Naive thymus-derived CD4-positive, alpha-beta T cell (primary cell): ENCODE measurements at regions of chr3 and their contacts with region 1.

Region 1: GRCh38 chr3:40452876-40453730 is 4.0 kb upstream of the RPL14 start:
- DNase-seq: peak; percentile 81 to 97 (median 93)
- ATAC-seq: peak; percentile 95
- H3K4me3 ChIP-seq: peak overlapping the region; percentile 79
- H3K4me3 Mint-ChIP-seq: peak overlapping the region; percentile 88 to 99 (median 94)
- H3K27ac ChIP-seq: peak overlapping the region; percentile 94
- H3K27ac Mint-ChIP-seq: peak overlapping the region; percentile 96 to 100 (median 98)
- H3K4me1 ChIP-seq: peaks cover 13 to 18% of the 10 kb centered on the region in 2 donors
- H3K4me1 Mint-ChIP-seq: peaks cover 13 to 53% (median 39%) of the 10 kb centered on the region in 7 donors
- H3K27me3 ChIP-seq: no peaks in the 10 kb centered on the region
- H3K27me3 Mint-ChIP-seq: no peaks in the 10 kb centered on the region

Region 2: DNA sequence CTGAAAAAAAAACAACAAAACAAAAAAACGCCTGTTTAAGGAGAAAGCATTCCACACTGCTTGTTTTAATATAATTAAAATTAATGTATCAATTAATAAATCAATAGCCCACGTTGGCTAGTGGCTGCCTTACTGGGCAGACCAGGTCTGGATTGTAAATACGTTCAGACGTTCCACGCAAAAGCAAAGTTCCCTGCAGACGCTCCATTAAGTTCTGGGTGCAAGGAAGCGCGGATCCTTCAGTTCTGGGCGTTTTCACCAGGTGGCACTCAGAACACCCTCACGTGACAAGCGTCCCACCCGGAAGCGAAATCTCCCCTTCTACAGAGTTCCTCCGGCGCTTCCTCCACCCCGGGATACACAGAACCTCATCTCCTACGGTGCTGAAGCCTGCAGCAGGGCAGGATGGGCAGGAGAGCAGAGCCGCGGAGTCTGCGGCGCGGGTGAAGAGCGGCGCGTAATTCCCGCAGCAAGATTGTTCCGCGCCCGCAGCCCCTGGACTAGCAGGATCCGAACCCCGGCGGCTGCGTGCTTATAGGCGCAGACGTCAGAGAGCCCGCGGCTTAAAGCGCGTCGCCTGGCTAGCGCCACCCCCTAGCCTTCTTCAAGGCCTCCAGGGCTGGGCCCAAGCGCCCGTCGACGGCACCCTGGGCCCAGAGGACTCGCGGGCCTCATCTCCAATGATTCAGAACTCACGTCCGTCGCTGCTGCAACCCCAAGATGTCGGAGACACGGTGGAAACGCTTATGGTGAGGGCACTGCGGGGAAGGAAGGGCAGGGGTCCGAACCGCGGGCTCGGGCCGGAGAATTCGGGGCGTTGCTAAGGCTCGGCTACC is 1069.8 kb before region 1 on chr3 and contains the start of gene SLC25A38:
- CTCF ChIA-PET with region 1: no interaction called
- POLR2A ChIA-PET with region 1: no interaction called
- intact Hi-C with region 1: loop called in 1 of 2 experiments (anchors 1 kb)
- DNase-seq: peak; percentile 60 to 86 (median 84)
- ATAC-seq: peak; percentile 86
- H3K4me3 ChIP-seq: peak within 1 kb of the TSS; percentile 88
- H3K4me3 Mint-ChIP-seq: peak within 1 kb of the TSS; percentile 91 to 99 (median 97)
- H3K27ac ChIP-seq: peak within 1 kb of the TSS; percentile 96
- H3K27ac Mint-ChIP-seq: peak within 1 kb of the TSS; percentile 95 to 100 (median 99)
- H3K4me1 ChIP-seq: peaks cover 26 to 39% of the 10 kb centered on the region in 2 donors
- H3K4me1 Mint-ChIP-seq: peaks cover 36 to 59% (median 49%) of the 10 kb centered on the region in 7 donors
- H3K27me3 ChIP-seq: no peaks in the 10 kb centered on the region
- H3K27me3 Mint-ChIP-seq: no peaks in the 10 kb centered on the region
- total RNA-seq, gene SLC25A38: 30.3 to 50.2 (median 46.8) TPM

Region 3: DNA sequence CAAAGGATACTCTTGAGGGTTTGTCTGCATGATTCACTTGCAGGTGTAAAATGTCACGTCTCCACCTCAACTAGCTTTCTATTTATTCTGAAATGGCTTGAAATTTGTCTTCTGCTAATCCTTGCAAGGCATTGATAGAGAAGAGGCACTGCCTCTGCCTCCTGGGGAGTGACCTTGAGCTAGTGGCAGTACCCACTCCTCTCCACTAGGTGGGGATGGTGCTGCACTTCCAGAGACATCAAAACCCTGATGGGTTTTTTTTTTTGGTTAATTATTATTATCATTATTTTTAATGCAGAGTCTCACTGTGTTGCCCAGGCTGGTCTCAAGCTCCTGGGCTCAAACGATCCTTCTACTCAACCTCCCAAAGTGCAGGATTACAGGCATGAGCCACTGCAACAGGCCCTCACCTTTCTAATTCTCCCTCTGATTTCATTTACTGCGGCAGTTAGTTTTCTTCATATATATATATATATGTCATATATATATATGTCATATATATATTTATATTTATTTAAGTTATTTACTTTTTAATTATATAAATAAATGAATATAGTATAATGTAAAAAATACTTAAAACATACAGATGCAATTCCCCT is 261.2 kb before region 1 on chr3:
- CTCF ChIA-PET with region 1: no interaction called
- POLR2A ChIA-PET with region 1: no interaction called
- intact Hi-C with region 1: loop called in 1 of 2 experiments (anchors 5 kb)
- DNase-seq: peak; percentile 7 to 55 (median 38)
- ATAC-seq: peak; percentile 85
- H3K4me3 ChIP-seq: no peak overlapping the region
- H3K4me3 Mint-ChIP-seq: no peak overlapping the region
- H3K27ac ChIP-seq: no peak overlapping the region
- H3K27ac Mint-ChIP-seq: no peak overlapping the region
- H3K4me1 ChIP-seq: no peaks in the 10 kb centered on the region
- H3K4me1 Mint-ChIP-seq: no peaks in the 10 kb centered on the region
- H3K27me3 ChIP-seq: no peaks in the 10 kb centered on the region
- H3K27me3 Mint-ChIP-seq: no peaks in the 10 kb centered on the region

Region 4: GRCh38 chr3:40464339-40465110 is 11.4 kb after region 1 on chr3:
- CTCF ChIA-PET with region 1: no interaction called
- POLR2A ChIA-PET with region 1: interaction called, 12 read pairs
- intact Hi-C with region 1: no loop called
- DNase-seq: peak in 7 of 9 donors; percentile 46 to 72 (median 65)
- ATAC-seq: peak; percentile 93
- H3K4me3 ChIP-seq: no peak overlapping the region
- H3K4me3 Mint-ChIP-seq: peak overlapping the region; percentile 6 to 67 (median 42)
- H3K27ac ChIP-seq: peak overlapping the region; percentile 43
- H3K27ac Mint-ChIP-seq: peak overlapping the region; percentile 35 to 90 (median 80)
- H3K4me1 ChIP-seq: peaks cover 13 to 20% of the 10 kb centered on the region in 2 donors
- H3K4me1 Mint-ChIP-seq: peaks cover 13 to 42% (median 34%) of the 10 kb centered on the region in 7 donors
- H3K27me3 ChIP-seq: no peaks in the 10 kb centered on the region
- H3K27me3 Mint-ChIP-seq: no peaks in the 10 kb centered on the region

Region 5: DNA sequence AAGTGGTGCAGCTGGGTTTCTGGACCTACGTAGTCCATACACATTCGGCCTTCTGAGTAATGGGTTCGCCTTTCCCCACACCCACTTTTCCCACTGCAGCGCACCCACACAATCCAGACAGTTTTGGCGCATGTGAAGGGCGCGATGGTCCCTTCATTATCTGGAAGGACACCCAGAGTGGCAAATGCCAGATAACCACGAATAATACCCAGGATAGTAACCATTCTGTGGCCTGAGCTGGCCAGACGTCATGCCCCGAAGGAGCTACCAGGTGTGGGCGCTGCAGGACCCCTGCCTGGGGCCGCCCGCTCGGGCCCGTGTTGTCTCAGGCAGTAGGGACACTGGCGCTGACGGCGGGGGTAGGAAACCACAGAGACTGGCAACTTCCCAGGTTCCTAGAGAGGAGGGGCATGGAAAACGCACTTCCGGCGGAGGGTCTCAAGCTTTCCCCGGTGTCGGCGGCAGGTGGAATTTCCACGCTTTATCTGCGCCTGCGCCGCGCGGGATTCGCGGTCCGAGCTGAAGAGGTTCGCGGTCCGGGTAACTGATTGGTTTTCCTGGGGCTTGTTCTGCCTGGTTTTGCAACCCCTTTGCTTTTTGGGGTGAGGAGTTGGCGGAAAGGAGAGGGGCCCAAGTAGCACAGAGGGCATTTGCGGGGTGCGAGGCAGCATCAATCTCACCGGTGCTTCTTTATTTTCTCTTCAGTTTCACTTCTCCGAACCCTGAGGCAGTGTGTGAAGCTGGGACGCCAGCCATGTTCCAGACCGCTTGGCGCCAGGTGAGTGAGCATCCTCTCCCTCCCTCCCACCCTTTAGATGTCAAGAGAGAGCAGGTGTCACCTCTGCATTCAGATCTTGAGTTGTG is 52.7 kb after region 1 on chr3 and contains the start of gene ZNF620:
- CTCF ChIA-PET with region 1: interaction called, 3 read pairs
- POLR2A ChIA-PET with region 1: interaction called, 11 read pairs
- intact Hi-C with region 1: loop called (anchors 1 kb)
- DNase-seq: peak; percentile 11 to 57 (median 29)
- ATAC-seq: peak; percentile 82
- H3K4me3 ChIP-seq: peak within 1 kb of the TSS; percentile 88
- H3K4me3 Mint-ChIP-seq: peak within 1 kb of the TSS; percentile 86 to 98 (median 97)
- H3K27ac ChIP-seq: peak within 1 kb of the TSS; percentile 61
- H3K27ac Mint-ChIP-seq: peak within 1 kb of the TSS; percentile 67 to 94 (median 86)
- H3K4me1 ChIP-seq: peaks cover 5% of the 10 kb centered on the region in 2 donors
- H3K4me1 Mint-ChIP-seq: peaks cover 6 to 27% (median 9%) of the 10 kb centered on the region in 7 donors
- H3K27me3 ChIP-seq: no peaks in the 10 kb centered on the region
- H3K27me3 Mint-ChIP-seq: peaks cover 0 to 12% (median 0%) of the 10 kb centered on the region in 5 donors
- total RNA-seq, gene ZNF620: 1.3 to 6.4 (median 3.3) TPM

Region 6: GRCh38 chr3:41117398-41117870 is 664.3 kb after region 1 on chr3:
- CTCF ChIA-PET with region 1: no interaction called
- POLR2A ChIA-PET with region 1: no interaction called
- intact Hi-C with region 1: loop called in 1 of 2 experiments (anchors 1 kb)
- DNase-seq: peak; percentile 67 to 93 (median 90)
- ATAC-seq: peak; percentile 92
- H3K4me3 ChIP-seq: peak overlapping the region; percentile 25
- H3K4me3 Mint-ChIP-seq: peak overlapping the region; percentile 43 to 90 (median 78)
- H3K27ac ChIP-seq: peak overlapping the region; percentile 68
- H3K27ac Mint-ChIP-seq: peak overlapping the region; percentile 67 to 98 (median 93)
- H3K4me1 ChIP-seq: peaks cover 12 to 27% of the 10 kb centered on the region in 2 donors
- H3K4me1 Mint-ChIP-seq: peaks cover 18 to 67% (median 46%) of the 10 kb centered on the region in 7 donors
- H3K27me3 ChIP-seq: no peaks in the 10 kb centered on the region
- H3K27me3 Mint-ChIP-seq: no peaks in the 10 kb centered on the region

Region 7: GRCh38 chr3:42012935-42013690 is 1560.0 kb after region 1 on chr3:
- CTCF ChIA-PET with region 1: no interaction called
- POLR2A ChIA-PET with region 1: no interaction called
- intact Hi-C with region 1: loop called (anchors 1 to 10 kb)
- DNase-seq: peak; percentile 36 to 65 (median 58)
- ATAC-seq: peak; percentile 88
- H3K4me3 ChIP-seq: peak overlapping the region; percentile 78
- H3K4me3 Mint-ChIP-seq: peak overlapping the region; percentile 86 to 95 (median 90)
- H3K27ac ChIP-seq: peak overlapping the region; percentile 78
- H3K27ac Mint-ChIP-seq: peak overlapping the region; percentile 84 to 98 (median 93)
- H3K4me1 ChIP-seq: peaks cover 10 to 15% of the 10 kb centered on the region in 2 donors
- H3K4me1 Mint-ChIP-seq: peaks cover 19 to 39% (median 37%) of the 10 kb centered on the region in 7 donors
- H3K27me3 ChIP-seq: no peaks in the 10 kb centered on the region
- H3K27me3 Mint-ChIP-seq: no peaks in the 10 kb centered on the region